ENCODE measurements at regions of chr11 and their contacts with region 1.

Region 1: DNA sequence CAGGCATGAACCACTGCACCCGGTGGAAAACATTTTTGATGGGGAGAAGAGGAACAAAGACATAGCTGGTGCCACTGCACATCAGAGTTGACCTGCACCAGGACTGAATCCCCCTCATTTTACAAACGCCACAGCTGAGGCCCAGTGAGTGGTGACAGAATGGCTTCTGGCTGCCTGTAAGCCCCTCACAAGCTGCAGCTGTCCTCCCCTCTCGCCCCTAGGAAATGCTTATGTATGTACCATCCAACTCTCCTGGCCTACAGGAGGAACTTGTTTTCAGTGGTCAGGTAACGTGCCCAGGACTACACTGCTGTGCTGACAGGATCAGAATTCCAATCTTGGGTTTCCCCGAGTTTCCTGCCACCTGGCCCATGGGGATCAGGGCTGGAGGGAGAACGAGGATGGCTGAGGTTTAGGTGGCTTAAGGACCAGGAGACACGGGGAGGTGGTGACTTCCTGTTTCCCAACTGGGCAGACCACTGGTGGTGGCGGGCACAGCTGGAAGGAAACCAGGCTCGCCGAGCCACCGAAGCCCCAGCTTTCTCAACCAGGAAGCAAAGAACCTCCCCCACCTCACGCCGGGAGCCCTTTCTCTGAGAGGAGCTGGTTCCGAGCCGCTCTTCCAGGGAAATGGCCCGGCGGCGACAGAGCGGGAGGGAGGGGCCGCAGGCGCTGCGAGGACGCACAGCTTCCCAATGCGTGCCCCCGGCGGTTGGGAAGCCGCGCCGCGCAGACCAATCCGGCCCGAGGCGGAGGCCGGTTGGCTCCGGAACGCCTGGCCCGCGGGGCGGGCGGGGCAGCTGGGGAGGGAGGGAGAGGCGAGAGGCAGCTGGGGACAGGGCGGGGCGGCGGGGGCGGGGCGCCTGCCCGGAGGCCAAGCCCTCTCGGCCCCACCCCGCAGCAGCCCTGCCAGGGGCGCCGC is 1.0 kb upstream of the LRFN4 start:
- DNase-seq: peak; percentile 99
- ATAC-seq: peak; percentile 76
- H3K4me3 ChIP-seq: peak overlapping the region; percentile 95
- H3K27ac ChIP-seq: peak overlapping the region; percentile 70
- H3K4me1 ChIP-seq: peaks cover 17% of the 10 kb centered on the region
- H3K27me3 ChIP-seq: no peaks in the 10 kb centered on the region
- CTCF ChIP-seq: no peak

Region 2: GRCh38 chr11:66868726-66869566 is 13.1 kb after region 1 on chr11:
- CTCF ChIA-PET with region 1: no interaction called
- POLR2A ChIA-PET with region 1: no interaction called
- intact Hi-C with region 1: loop called (anchors 1 kb)
- DNase-seq: peak; percentile 87
- ATAC-seq: peak; percentile 96
- H3K4me3 ChIP-seq: no peak overlapping the region
- H3K27ac ChIP-seq: no peak overlapping the region
- H3K4me1 ChIP-seq: peaks cover 7% of the 10 kb centered on the region
- H3K27me3 ChIP-seq: no peaks in the 10 kb centered on the region
- CTCF ChIP-seq: peak; percentile 82

Measured in PC-3 (cell line).